Activated CD4-positive, alpha-beta T cell treated with anti-CD3 and anti-CD28 coated beads for 36 hours (primary cell): ENCODE measurements at regions of chr19 and their contacts with region 1.

Region 1: GRCh38 chr19:7340959-7341837 is 7.5 kb upstream of the ARHGEF18 start:
- DNase-seq: peak; percentile 91
- ATAC-seq: peak; percentile 18
- H3K4me3 Mint-ChIP-seq: peak overlapping the region; percentile 3
- H3K27ac Mint-ChIP-seq: peak overlapping the region; percentile 63
- H3K4me1 Mint-ChIP-seq: peaks cover 54% of the 10 kb centered on the region
- H3K27me3 Mint-ChIP-seq: no peaks in the 10 kb centered on the region

Region 2: DNA sequence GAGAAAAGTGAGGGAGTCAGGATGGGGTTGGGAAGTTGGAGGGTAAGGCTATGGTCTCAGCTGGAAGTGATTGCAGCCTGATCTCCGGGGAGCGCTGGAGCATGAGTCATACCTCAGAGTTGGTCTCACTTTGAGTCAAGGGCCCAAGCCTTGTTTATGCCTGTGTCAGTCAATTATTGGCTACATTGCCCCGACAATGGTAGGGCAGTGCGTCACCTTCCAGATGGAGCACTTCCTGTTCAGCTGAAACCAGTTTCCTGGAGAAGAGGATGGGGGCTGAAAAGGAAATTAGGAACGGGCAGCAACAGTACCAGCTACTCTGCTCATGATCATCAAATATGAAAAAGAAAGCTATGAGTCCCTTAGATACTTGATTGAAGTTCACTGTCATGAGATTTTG is 393.5 kb before region 1 on chr19:
- CTCF ChIA-PET with region 1: no interaction called
- POLR2A ChIA-PET with region 1: no interaction called
- intact Hi-C with region 1: loop called in 1 of 2 experiments (anchors 10 kb)
- DNase-seq: peak; percentile 80
- ATAC-seq: peak; percentile 98
- H3K4me3 Mint-ChIP-seq: peak overlapping the region; percentile 18
- H3K27ac Mint-ChIP-seq: peak overlapping the region; percentile 55
- H3K4me1 Mint-ChIP-seq: peaks cover 18% of the 10 kb centered on the region
- H3K27me3 Mint-ChIP-seq: no peaks in the 10 kb centered on the region

Region 3: DNA sequence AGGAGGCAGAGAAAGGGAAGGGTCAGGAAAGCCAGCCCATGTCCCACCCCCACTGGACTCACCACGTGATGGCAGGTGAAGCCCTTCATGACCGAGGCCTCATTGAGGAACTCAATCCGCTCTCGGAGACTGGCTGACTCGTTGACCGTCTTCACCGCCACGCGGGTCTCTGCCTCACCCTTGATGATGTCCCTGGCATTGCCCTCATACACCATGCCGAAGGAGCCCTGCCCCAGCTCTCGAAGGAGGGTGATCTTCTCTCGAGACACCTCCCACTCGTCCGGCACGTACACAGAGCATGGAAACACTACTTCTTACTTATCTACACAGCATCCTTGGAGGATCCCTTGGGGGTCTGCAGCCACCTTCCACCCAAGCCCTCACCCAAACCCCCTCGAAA is 216.0 kb before region 1 on chr19:
- CTCF ChIA-PET with region 1: no interaction called
- POLR2A ChIA-PET with region 1: no interaction called
- intact Hi-C with region 1: no loop called
- DNase-seq: no peak
- ATAC-seq: no peak
- H3K4me3 Mint-ChIP-seq: no peak overlapping the region
- H3K27ac Mint-ChIP-seq: no peak overlapping the region
- H3K4me1 Mint-ChIP-seq: no peaks in the 10 kb centered on the region
- H3K27me3 Mint-ChIP-seq: no peaks in the 10 kb centered on the region

Region 4: DNA sequence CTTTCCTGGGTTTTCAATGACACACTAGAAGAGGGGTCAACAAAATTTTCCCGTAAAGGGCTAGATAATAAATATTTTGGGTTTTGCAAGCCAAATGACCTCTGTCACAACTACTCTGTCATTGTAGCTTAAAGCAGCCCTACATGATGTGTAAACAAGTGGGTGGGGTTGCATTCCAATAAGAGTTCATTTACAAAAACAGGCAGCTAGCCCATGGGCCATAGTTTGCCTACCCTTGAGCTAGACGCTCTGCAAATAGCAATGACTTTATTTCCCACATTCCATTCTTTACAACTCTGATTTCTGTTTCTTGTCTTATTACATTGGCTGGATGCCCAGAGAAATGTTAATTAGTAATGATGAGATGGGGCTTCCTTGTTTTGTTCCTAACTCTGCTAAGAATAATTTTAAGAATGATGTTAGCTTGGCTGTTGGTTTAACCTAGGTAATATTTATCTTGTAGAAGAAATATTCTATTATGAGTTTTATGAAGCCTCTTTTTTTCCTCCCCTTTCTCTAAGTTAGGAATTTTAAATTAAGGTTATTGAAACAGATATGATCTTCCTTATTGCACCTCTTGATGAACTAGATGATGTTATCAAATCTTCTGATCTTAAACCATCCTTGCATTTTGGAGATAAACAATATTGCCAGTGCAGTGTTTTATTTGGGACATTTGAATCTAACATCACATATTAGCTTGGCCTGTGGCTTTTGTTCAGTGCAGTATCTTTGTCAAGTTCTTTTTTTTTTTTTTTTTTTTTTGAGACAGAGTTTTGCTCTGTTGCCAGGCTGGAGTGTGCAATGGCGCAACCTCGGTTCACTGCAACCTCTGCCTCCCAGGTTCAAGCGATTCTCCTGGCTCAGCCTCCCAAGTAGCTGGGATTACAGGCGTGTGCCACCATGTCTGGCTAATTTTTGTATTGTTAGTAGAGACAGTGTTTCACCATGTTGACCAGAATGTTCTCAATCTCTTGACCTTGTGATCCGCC is 195.4 kb before region 1 on chr19:
- CTCF ChIA-PET with region 1: interaction called, 5 read pairs
- POLR2A ChIA-PET with region 1: no interaction called
- intact Hi-C with region 1: loop called (anchors 1 kb)
- DNase-seq: no peak
- ATAC-seq: no peak
- H3K4me3 Mint-ChIP-seq: no peak overlapping the region
- H3K27ac Mint-ChIP-seq: no peak overlapping the region
- H3K4me1 Mint-ChIP-seq: no peaks in the 10 kb centered on the region
- H3K27me3 Mint-ChIP-seq: no peaks in the 10 kb centered on the region

Region 5: DNA sequence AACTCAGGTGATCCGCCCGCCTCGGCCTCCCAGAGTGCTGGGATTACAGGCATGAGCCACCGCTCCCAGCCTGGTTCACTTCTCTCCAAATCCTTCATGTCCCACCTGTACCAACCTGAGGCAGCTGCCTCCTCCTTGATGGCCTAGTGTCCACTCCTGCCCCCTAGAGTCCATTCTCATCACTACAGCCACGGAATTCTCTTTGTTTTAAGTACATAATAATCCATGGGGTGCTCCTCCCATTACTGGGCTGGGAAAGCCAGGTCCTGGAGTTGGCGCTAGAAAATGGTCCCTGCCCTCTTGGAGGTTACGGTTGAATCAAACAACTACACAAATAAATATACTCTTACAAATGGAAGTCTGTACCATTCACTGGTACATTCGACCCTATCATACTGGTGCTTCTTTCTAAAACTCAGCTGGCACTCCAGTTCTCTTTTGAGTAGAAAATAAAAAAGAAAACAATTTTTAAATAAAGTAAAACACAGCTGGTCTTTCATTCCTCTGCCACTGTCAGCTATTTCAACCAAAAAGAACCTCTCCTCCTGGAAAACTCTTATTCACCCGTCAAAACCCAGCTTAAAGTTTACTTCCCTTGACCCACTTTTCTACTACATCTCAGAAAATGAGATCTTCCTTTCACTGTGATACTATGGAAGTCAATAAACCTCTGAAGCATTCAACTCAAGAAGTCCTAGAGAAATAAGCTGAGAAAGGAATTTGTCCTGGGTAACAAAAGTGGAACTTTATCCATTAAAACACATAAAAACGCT is 14.9 kb before region 1 on chr19:
- CTCF ChIA-PET with region 1: interaction called, 20 read pairs
- POLR2A ChIA-PET with region 1: no interaction called
- intact Hi-C with region 1: no loop called
- DNase-seq: peak; percentile 71
- ATAC-seq: no peak
- H3K4me3 Mint-ChIP-seq: no peak overlapping the region
- H3K27ac Mint-ChIP-seq: no peak overlapping the region
- H3K4me1 Mint-ChIP-seq: no peaks in the 10 kb centered on the region
- H3K27me3 Mint-ChIP-seq: no peaks in the 10 kb centered on the region

Region 6: GRCh38 chr19:7554990-7555864 is 214.0 kb after region 1 on chr19:
- CTCF ChIA-PET with region 1: no interaction called
- POLR2A ChIA-PET with region 1: no interaction called
- intact Hi-C with region 1: no loop called
- DNase-seq: peak; percentile 71
- ATAC-seq: peak; percentile 46
- H3K4me3 Mint-ChIP-seq: no peak overlapping the region
- H3K27ac Mint-ChIP-seq: no peak overlapping the region
- H3K4me1 Mint-ChIP-seq: peaks cover 4% of the 10 kb centered on the region
- H3K27me3 Mint-ChIP-seq: no peaks in the 10 kb centered on the region